ENCODE measurements at regions of chr3 and their contacts with region 1.

Region 1: GRCh38 chr3:114506622-114507300 is 212.9 kb downstream of the TIGIT start:
- DNase-seq: no peak
- H3K4me3 ChIP-seq: no peak overlapping the region
- H3K27ac ChIP-seq: no peak overlapping the region
- H3K4me1 ChIP-seq: peaks cover 7% of the 10 kb centered on the region
- H3K27me3 ChIP-seq: no peaks in the 10 kb centered on the region
- CTCF ChIP-seq: no peak
- POLR2A ChIP-seq: no peak

Region 2: GRCh38 chr3:114464548-114464947 is 42.2 kb before region 1 on chr3:
- CTCF ChIA-PET with region 1: no interaction called
- POLR2A ChIA-PET with region 1: no interaction called
- dilution Hi-C with region 1: no loop called
- intact Hi-C with region 1: loop called (anchors 2 kb)
- DNase-seq: no peak
- H3K4me3 ChIP-seq: no peak overlapping the region
- H3K27ac ChIP-seq: no peak overlapping the region
- H3K4me1 ChIP-seq: no peaks in the 10 kb centered on the region
- H3K27me3 ChIP-seq: no peaks in the 10 kb centered on the region
- CTCF ChIP-seq: no peak
- POLR2A ChIP-seq: no peak

Region 3: DNA sequence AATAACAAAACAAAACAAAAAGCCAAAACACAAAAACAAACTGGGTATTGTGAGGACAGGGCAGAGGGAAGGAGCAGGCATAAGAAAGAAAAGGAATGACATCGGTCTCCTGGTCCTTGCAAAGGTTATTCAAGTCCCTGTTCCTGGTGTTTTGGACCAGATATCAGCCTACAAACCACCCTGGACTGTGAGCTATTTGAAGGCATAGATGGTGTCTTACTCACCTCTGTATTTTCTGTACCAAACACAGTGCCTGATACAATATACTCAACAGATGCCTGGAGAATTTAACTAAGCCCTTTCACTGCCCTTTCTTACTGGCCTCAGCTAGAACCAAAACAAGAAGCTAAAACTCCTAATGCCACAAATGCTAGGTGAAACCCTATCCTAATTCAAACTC is 15.9 kb before region 1 on chr3:
- CTCF ChIA-PET with region 1: interaction called, 10 read pairs
- POLR2A ChIA-PET with region 1: no interaction called
- dilution Hi-C with region 1: no loop called
- intact Hi-C with region 1: no loop called
- DNase-seq: no peak
- H3K4me3 ChIP-seq: no peak overlapping the region
- H3K27ac ChIP-seq: no peak overlapping the region
- H3K4me1 ChIP-seq: peaks cover 12% of the 10 kb centered on the region
- H3K27me3 ChIP-seq: no peaks in the 10 kb centered on the region
- CTCF ChIP-seq: no peak
- POLR2A ChIP-seq: no peak